ENCODE measurements at regions of chr6 and their contacts with region 1.

Region 1: DNA sequence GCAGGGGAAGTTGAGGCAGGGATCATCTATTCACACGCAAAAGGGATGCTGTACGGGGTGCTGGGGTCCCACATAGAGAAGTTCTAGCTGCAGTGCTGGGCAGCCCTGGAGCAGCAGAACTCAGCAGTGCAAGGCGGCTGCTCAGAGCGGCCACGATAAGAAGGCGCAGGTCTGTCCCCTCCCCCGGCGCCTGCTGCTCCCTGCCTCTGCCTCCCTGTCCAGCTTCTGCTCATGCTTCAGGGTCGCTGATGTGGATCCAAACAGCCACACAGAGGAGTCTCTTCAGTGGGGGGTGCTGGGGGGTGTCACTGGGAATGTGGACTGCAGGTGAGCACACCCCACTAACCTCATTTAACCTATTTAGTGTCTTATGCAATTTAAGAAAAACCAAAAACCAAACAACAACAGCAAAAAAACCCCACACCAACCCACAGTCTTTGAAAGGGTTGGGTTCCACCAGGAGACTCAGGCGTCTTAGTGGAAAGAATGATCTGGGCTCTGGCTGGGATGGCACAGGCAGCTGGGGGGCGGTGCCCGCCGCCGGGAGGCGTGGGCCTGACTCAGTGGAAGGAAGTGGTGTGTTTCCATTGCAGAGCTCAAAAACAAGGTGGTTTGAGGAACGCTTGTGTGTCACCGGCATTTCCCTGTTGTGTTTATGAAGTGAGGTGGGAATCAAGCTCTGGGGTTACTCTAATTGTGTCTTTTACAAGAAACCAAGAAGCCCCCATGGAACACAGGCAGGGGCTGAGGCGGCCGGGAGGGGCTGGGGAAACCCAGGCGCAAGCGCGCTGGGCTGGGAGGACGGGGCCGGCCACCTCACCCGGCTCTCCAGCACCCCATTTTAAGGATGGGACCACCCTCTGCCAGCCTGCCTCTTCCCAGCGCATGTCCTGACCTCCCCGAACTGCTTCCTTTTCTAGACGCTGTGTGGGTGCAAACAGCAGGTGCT is 55.1 kb downstream of the IRF4 start:
- DNase-seq: peak in 8 of 9 donors; percentile 51 to 95 (median 66)
- ATAC-seq: peak; percentile 73
- H3K4me3 ChIP-seq: peak overlapping the region; percentile 38
- H3K4me3 Mint-ChIP-seq: peak overlapping the region; percentile 34 to 76 (median 59)
- H3K27ac ChIP-seq: no peak overlapping the region
- H3K27ac Mint-ChIP-seq: peak overlapping the region; percentile 70 to 92 (median 80)
- H3K4me1 ChIP-seq: peaks cover 36 to 48% of the 10 kb centered on the region in 2 donors
- H3K4me1 Mint-ChIP-seq: peaks cover 40 to 57% (median 56%) of the 10 kb centered on the region in 7 donors
- H3K27me3 ChIP-seq: no peaks in the 10 kb centered on the region
- H3K27me3 Mint-ChIP-seq: peaks cover 0 to 2% (median 0%) of the 10 kb centered on the region in 5 donors

Region 2: DNA sequence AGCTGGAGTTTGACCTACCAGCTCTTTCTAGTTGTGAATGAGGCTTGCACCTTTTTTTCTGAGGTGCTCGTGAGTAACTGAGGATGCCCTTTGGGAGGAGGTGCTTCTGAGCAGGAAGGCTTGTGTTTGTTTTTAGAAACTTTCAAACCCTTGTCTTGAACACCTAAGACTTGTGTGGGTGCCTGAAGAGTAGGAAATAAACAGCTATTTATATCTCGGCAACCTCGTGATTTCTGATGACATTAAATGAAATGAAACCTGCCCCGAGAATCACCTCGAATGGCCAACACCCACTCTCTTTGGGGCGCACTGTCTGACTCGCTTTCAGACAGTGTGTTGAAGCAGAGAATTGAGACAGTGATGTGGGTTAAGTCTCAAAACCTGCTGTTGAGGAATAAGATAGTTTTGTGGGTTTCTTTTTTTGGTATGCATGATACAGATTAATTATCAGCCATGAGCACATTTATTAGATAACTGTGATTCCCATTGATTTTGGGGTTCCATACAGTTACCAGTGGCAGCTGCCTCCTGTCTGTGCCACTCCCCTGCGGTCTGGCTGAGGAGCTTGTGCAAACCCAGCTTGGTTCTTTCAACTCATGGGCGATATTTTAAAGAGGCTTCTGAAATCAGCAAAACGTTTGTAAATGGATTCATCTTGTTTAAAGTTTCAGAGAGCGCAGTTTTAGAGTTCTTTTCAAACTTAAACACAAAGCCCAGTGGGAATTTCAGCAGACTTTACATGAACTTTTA is 46.7 kb before region 1 on chr6:
- CTCF ChIA-PET with region 1: no interaction called
- POLR2A ChIA-PET with region 1: interaction called, 21 read pairs
- intact Hi-C with region 1: loop called (anchors 2 kb)
- DNase-seq: peak in 7 of 9 donors; percentile 27 to 66 (median 60)
- ATAC-seq: peak; percentile 76
- H3K4me3 ChIP-seq: no peak overlapping the region
- H3K4me3 Mint-ChIP-seq: peak overlapping the region in 8 of 10 donors; percentile 32 to 78 (median 56)
- H3K27ac ChIP-seq: no peak overlapping the region
- H3K27ac Mint-ChIP-seq: peak overlapping the region; percentile 41 to 84 (median 77)
- H3K4me1 ChIP-seq: peaks cover 8 to 29% of the 10 kb centered on the region in 2 donors
- H3K4me1 Mint-ChIP-seq: peaks cover 19 to 92% (median 49%) of the 10 kb centered on the region in 7 donors
- H3K27me3 ChIP-seq: no peaks in the 10 kb centered on the region
- H3K27me3 Mint-ChIP-seq: no peaks in the 10 kb centered on the region

Region 3: DNA sequence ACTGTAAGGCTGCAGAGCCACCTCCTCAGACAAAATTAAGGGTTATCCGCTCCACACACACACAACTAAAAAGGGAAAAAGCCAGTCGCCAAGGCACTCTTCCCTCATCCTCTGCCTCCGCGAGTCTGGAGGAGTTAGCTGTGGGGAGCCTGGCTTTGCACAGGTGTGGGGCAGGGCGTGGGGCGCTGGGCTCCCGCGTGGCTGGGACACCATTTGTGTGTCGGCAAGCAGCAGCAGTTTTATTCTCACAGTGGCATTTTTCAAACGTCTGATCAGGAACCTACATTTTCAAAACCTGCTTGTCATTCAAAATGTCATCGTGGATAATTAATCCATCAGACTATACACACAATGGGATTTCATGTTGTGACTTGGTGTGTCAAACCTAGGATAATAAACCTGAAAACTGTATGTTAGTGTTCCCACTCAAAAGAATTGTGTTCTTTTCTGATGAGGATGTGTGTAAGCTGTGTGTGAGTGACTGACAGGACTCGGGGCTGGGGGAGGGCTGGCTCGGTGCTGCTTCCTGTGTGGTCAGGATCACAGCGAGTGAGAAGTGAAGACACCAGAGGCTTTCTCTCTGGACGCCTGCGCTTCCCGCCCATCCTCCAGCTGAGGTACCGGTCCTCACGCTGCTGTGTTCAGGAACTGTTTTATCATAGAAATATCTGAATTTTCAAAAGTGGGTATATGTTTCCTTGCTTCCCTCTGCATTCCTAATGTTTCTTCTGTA is 27.9 kb after region 1 on chr6:
- CTCF ChIA-PET with region 1: no interaction called
- POLR2A ChIA-PET with region 1: no interaction called
- intact Hi-C with region 1: loop called (anchors 1 to 2 kb)
- DNase-seq: peak; percentile 25 to 75 (median 72)
- ATAC-seq: peak; percentile 95
- H3K4me3 ChIP-seq: peak overlapping the region; percentile 36
- H3K4me3 Mint-ChIP-seq: peak overlapping the region; percentile 9 to 82 (median 72)
- H3K27ac ChIP-seq: peak overlapping the region; percentile 47
- H3K27ac Mint-ChIP-seq: peak overlapping the region; percentile 7 to 83 (median 60)
- H3K4me1 ChIP-seq: peaks cover 14 to 22% of the 10 kb centered on the region in 2 donors
- H3K4me1 Mint-ChIP-seq: peaks cover 25 to 76% (median 58%) of the 10 kb centered on the region in 7 donors
- H3K27me3 ChIP-seq: no peaks in the 10 kb centered on the region
- H3K27me3 Mint-ChIP-seq: no peaks in the 10 kb centered on the region

Region 4: GRCh38 chr6:498795-499231 is 52.1 kb after region 1 on chr6:
- CTCF ChIA-PET with region 1: interaction called, 3 read pairs
- POLR2A ChIA-PET with region 1: interaction called, 7 read pairs
- intact Hi-C with region 1: loop called (anchors 2 kb)
- DNase-seq: peak in 2 of 9 donors; percentile 25 to 57
- ATAC-seq: peak; percentile 68
- H3K4me3 ChIP-seq: no peak overlapping the region
- H3K4me3 Mint-ChIP-seq: peak overlapping the region in 9 of 10 donors; percentile 50 to 86 (median 78)
- H3K27ac ChIP-seq: peak overlapping the region; percentile 40
- H3K27ac Mint-ChIP-seq: peak overlapping the region; percentile 46 to 95 (median 75)
- H3K4me1 ChIP-seq: peaks cover 35 to 38% of the 10 kb centered on the region in 2 donors
- H3K4me1 Mint-ChIP-seq: peaks cover 33 to 83% (median 69%) of the 10 kb centered on the region in 7 donors
- H3K27me3 ChIP-seq: no peaks in the 10 kb centered on the region
- H3K27me3 Mint-ChIP-seq: no peaks in the 10 kb centered on the region

Region 5: DNA sequence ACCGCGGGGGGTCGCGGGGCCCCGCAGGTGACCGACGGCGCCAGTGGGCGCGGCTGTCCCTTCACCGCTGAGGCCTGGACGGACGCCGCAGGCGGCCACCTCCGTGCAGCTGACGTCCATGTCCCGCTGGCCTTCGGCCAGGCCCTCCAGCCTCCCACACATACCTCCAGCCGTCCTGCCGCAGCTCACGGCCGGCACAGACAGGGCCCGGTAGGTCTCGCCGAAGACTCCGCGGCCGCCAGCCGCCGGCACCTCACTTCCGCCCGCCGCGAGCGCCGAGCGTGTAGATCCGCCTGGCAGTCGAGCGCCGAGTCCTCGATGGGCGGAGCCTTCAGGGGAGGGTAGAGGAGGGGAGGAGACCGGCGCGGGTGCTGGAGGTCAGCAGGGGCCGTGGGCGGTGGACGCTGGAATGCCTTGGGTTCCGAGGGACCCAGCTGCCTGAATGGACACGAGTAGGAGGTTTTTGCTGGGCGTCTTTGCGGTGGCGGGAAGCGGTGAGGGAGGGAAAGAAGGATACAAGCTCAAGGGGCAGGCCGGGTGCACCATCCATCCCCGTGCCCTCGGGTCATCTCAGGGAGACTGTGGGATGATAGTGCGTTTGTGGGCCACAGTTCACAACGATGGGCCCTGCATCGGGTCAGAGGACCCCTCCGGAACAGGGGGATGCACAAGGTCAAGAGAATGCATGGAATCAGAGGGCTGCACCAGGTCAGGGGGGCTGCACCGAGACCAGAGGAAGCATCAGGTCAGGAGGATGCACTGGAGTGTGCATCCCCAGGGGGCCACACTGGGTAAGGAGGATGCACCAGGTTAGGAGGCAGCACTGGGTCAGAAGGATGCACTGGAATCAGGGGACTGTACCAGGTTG is 246.4 kb after region 1 on chr6 and contains the start of gene EXOC2:
- CTCF ChIA-PET with region 1: no interaction called
- POLR2A ChIA-PET with region 1: no interaction called
- intact Hi-C with region 1: loop called in 1 of 2 experiments (anchors 1 kb)
- DNase-seq: peak; percentile 70 to 88 (median 81)
- ATAC-seq: peak; percentile 93
- H3K4me3 ChIP-seq: peak within 1 kb of the TSS; percentile 87
- H3K4me3 Mint-ChIP-seq: peak within 1 kb of the TSS; percentile 92 to 96 (median 95)
- H3K27ac ChIP-seq: peak within 1 kb of the TSS; percentile 83
- H3K27ac Mint-ChIP-seq: peak within 1 kb of the TSS; percentile 84 to 92 (median 91)
- H3K4me1 ChIP-seq: peaks cover 14 to 20% of the 10 kb centered on the region in 2 donors
- H3K4me1 Mint-ChIP-seq: peaks cover 23 to 45% (median 29%) of the 10 kb centered on the region in 7 donors
- H3K27me3 ChIP-seq: no peaks in the 10 kb centered on the region
- H3K27me3 Mint-ChIP-seq: no peaks in the 10 kb centered on the region
- total RNA-seq, gene EXOC2: 26.7 to 40.6 (median 38.8) TPM

Region 6: DNA sequence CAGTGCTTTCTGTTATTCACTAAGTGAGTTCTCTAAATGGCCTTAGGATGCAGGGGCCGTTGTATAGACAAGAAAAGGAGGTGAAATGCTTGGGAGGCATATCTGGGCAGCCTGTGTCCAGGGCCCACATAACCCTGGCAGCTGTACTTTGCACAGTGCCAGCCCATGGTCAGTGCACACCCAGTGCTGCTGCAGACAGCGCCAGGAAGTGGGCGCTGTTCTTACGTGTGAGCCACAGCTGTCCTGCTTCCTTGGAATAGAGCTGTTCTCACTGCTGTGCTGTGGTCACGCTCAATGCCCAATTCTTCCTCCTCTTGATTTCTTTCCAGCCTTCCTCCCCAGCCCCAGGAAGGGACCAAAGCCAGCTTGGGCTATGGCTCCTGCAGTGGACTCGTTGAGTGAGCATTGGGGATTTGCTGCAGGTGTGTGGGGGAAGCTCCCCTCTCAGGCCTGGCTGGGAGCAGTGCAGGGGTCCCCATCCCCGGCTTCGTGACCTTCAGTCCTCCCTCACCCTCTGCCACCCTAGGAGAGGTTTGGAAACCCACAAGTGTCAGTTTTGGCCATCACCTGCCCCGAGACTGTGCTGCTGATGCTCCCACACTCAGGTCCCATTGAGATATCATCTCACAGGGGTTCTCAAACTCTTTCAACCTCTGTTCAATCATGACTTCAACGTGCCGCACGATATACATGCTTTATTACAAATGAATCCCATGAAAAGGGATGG is 493.0 kb after region 1 on chr6:
- CTCF ChIA-PET with region 1: no interaction called
- POLR2A ChIA-PET with region 1: no interaction called
- intact Hi-C with region 1: no loop called
- DNase-seq: no peak
- ATAC-seq: no peak
- H3K4me3 ChIP-seq: no peak overlapping the region
- H3K4me3 Mint-ChIP-seq: no peak overlapping the region
- H3K27ac ChIP-seq: no peak overlapping the region
- H3K27ac Mint-ChIP-seq: no peak overlapping the region
- H3K4me1 ChIP-seq: no peaks in the 10 kb centered on the region
- H3K4me1 Mint-ChIP-seq: no peaks in the 10 kb centered on the region
- H3K27me3 ChIP-seq: no peaks in the 10 kb centered on the region
- H3K27me3 Mint-ChIP-seq: peaks cover 4 to 32% (median 13%) of the 10 kb centered on the region in 5 donors